ENCODE measurements at regions of chr5 and their contacts with region 1.

Region 1: DNA sequence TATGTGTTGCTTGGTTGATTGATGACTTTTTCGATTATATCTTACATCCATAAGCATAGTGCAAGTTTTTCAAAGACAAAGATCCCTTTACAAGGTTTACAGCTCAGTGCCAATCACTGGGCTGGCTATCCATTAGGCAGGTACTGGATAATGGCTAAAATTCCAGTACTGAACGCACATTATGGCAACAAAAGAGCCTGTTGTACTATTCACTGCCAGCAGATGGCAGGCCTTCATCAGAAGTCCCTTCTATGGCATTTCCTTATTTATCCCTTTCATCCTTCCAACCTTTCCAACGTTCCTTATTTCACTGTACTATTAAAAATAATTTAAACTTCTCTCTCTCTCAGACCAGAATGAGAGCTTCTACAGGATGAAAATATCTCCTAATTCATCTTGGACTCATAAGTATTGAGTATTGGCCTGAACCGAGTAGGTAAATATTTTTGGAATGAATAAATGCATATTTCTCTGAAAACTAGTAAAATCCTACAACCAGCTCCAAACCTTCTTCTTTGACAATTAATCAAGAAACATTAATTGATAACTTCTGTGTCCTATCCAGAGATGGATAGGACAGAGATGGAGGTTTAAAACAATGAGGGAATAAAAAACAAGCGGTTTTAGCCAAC is 6.7 kb upstream of the WNT8A start:
- DNase-seq: peak; percentile 77
- H3K4me3 ChIP-seq: no peak overlapping the region
- H3K27ac ChIP-seq: no peak overlapping the region
- H3K4me1 ChIP-seq: peaks cover 0 to 6% (median 0%) of the 10 kb centered on the region in 4 donors
- H3K27me3 ChIP-seq: no peaks in the 10 kb centered on the region
- CTCF ChIP-seq: peak; percentile 74 to 86 (median 79)
- EP300 ChIP-seq: no peak
- POLR2A ChIP-seq: no peak

Region 2: GRCh38 chr5:138032572-138033378 is 44.4 kb before region 1 on chr5 and contains the start of gene FAM13B:
- intact Hi-C with region 1: no loop called
- DNase-seq: peak; percentile 90
- H3K4me3 ChIP-seq: peak within 1 kb of the TSS; percentile 82 to 100 (median 96)
- H3K27ac ChIP-seq: peak within 1 kb of the TSS; percentile 96 to 100 (median 99)
- H3K4me1 ChIP-seq: peaks cover 0 to 55% (median 51%) of the 10 kb centered on the region in 4 donors
- H3K27me3 ChIP-seq: no peaks in the 10 kb centered on the region
- CTCF ChIP-seq: peak in 1 of 4 experiments; percentile 21
- EP300 ChIP-seq: no peak
- POLR2A ChIP-seq: peak; percentile 73 to 78
- total RNA-seq, gene FAM13B: 47.2 to 81.7 (median 58.7) TPM

Region 3: DNA sequence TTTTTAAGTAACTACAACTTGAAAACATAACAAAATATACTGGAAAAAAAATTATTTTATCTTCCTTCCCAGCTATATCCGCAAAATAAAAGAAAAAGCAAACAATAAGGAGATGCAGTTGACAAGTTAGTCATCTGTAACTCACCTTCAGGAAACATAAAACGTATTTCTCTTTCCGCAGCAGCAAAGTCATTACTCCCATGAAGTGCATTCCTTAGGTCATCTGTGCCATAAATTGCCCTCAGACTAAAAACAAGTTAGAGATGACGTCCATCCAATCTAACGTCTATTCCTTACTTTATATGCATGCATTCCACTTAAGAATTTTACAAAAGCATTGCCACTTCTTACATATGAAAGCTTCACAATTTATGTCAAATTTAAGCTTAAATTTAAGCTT is 51.2 kb after region 1 on chr5:
- intact Hi-C with region 1: loop called (anchors 1 kb)
- DNase-seq: no peak
- H3K4me3 ChIP-seq: no peak overlapping the region
- H3K27ac ChIP-seq: no peak overlapping the region
- H3K4me1 ChIP-seq: no peaks in the 10 kb centered on the region
- H3K27me3 ChIP-seq: no peaks in the 10 kb centered on the region
- CTCF ChIP-seq: no peak
- EP300 ChIP-seq: no peak
- POLR2A ChIP-seq: no peak

Region 4: GRCh38 chr5:138192826-138193225 is 115.6 kb after region 1 on chr5:
- intact Hi-C with region 1: no loop called
- DNase-seq: no peak
- H3K4me3 ChIP-seq: no peak overlapping the region
- H3K27ac ChIP-seq: no peak overlapping the region
- H3K4me1 ChIP-seq: no peaks in the 10 kb centered on the region
- H3K27me3 ChIP-seq: no peaks in the 10 kb centered on the region
- CTCF ChIP-seq: no peak
- EP300 ChIP-seq: no peak
- POLR2A ChIP-seq: no peak

Measured in sigmoid colon (tissue), 7 donors.